ENCODE measurements at regions of chr19 and their contacts with region 1.

Region 1: DNA sequence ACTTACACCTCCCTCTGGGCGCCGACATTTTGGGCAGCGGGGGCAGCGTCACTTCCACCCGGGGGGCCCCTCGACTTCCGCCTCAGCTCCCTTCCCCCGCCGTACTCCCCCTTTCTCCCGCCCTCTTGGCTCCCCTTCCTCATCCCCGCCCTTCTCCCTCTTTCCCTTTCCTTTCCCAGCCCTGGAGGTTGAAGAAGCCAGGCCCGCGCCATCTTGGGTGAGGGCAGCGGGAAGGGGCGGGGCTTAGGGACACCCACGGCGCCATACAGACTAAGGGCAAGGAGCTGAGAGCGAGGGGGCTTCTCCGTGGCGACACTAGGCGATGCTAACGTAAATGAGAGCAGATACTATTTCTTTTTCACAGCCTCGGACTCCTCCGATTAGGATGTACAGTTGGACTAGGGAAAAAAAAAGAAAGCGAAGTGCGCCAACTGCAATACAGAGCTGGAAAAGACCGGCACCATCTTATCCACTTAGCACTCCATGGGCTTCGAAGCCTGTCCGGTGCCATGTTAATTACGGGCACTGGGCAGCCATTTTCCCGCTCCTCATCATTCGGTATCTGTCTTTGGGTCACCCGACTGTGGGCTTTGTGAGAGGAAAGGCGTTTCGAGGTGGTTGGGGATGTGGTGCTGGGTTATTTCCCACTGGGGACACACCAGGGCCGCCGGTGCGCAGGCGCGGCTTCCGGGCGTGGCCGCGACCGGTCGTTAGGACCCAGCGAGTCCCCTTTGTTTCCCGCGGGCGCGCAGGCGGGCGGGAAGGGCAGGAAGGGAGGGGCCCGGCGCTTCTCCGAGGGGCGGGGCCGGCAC is at the start of gene FIZ1:
- DNase-seq: peak; percentile 99
- total RNA-seq, gene FIZ1: 7.8 to 9.7 TPM

Region 2: DNA sequence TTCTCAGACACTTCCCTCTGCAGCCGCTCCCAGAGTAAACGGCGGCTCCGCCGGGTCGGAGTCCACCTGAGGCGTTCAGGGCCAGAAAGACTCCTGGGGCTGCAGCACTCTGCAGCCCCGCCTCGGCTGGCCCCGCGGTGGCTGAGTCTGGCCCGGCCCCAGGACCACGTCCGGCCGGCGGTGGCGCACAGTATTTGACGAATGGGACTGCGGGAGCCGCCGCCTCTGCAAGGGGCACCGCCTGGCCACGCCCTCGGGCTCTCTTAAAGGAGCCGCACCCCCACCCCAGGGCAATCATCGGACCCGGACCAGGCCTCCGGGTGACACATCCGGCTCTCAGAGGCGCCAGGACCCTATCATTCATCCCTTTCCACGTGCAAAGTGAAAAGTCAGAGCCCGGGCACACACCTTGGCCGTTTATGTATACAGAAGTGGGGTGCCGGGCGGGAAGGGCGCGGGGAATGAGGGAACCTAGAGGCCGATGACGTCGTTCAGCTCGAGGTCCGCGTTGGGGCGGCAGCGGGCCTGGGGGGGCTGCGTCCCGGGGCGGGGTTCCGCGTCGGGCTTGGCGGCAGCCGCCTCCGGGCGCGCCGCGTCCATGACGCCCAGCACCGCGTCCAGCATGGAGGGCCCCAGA is 1134.9 kb before region 1 on chr19:
- intact Hi-C with region 1: loop called in 1 of 2 experiments (anchors 5 kb)
- DNase-seq: peak; percentile 97

Region 3: GRCh38 chr19:55656988-55657747 is 57.5 kb after region 1 on chr19:
- intact Hi-C with region 1: no loop called
- DNase-seq: no peak

Region 4: GRCh38 chr19:55738302-55738701 is 138.6 kb after region 1 on chr19 and contains the start of gene NLRP9:
- intact Hi-C with region 1: no loop called
- DNase-seq: no peak
- total RNA-seq, gene NLRP9: not detected

Region 5: GRCh38 chr19:55795021-55795420 is 195.3 kb after region 1 on chr19:
- intact Hi-C with region 1: no loop called
- DNase-seq: no peak

Region 6: DNA sequence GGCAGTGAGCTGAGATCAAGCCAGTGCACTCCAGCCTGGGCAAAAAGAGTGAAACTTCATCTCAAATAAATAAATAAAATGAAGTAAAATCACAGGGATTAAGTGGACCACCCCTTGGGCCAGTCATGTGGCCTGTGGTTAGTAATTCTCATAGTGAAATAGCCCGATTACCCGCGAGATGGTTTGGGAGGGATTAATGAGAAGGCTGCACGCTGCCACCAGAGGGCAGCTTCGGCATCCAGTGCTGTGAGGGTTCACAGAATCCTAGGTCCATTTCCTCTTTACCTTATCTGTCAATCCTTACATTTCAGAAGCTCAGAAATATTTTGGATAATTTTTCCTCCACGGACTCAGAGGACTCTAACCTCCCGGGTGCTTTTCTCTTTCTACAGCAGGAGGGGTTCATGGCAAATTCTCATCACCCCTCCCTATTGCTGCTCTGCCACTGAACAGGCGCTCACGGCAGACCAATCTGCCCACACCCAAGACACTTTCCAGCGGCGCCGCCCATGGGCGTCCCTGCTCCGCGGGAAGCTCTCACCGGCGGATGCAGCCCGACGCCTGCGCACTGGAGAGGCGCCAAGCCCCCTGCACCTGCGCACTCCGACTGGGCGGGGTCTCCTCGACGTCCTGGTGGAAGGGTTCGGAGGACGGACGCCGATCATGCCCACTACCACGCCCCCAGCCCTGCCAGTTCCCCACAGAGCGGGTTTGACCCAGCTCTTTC is 1060.9 kb after region 1 on chr19:
- intact Hi-C with region 1: loop called in 1 of 2 experiments (anchors 5 kb)
- DNase-seq: no peak

Measured in posterior vena cava (tissue), 2 donors.